ENCODE measurements at regions of chr11 and their contacts with region 1.

Region 1: DNA sequence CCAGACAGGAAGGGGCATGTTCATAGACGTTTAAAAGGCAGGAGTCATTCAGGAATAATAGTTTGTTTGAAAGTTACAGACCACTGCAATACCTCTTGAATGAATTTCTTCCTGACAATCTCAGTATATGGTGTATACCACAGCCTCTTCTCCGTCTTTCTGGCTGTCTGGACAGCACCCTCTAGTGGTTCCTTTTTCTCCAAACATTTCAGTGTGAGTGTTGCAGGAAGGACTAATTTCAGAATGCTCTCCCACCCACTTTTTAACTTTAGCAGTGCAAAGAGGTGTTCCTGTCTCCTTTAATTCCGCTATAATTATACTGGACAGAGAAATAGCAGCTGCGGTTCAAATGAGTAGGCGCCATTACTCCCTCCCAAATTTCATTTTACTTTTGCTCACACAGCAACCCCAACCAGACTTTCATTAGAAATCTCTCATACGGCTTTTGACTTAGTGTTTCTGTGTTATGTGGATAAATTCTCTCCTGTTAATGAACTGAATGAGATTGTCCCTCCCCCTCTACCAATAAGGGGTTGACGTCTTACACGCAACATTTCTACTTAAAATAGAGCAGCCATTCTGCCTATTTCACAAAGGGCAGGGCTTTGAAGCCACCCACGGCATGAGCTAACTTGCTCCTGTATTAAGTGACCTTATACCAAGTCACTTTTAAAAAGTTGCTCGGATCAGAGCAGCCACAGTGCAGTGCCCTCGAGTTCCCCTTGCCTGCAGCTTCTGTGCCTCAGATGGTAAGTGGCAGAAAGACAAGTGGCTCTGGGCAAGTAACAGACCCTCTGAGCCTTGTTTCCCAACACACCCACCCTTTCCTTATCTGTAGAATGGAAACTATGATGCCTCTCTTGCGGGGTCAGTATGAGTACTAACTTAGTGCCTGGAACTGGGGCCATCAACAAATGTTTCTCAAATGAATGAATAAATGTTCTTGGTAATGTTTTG is 368.6 kb downstream of the OPCML start:
- DNase-seq: peak in 1 of 2 donors; percentile 24
- ATAC-seq: peak; percentile 63 to 95 (median 78)
- H3K4me3 ChIP-seq: peak overlapping the region in 3 of 10 donors; percentile 2 to 26 (median 16)
- H3K27ac ChIP-seq: peak overlapping the region in 1 of 10 donors; percentile 31
- H3K4me1 ChIP-seq: peaks cover 0 to 7% (median 0%) of the 10 kb centered on the region in 9 donors
- H3K27me3 ChIP-seq: peaks cover 0 to 44% (median 6%) of the 10 kb centered on the region in 7 donors
- CTCF ChIP-seq: peak; percentile 48 to 80 (median 75)

Region 2: DNA sequence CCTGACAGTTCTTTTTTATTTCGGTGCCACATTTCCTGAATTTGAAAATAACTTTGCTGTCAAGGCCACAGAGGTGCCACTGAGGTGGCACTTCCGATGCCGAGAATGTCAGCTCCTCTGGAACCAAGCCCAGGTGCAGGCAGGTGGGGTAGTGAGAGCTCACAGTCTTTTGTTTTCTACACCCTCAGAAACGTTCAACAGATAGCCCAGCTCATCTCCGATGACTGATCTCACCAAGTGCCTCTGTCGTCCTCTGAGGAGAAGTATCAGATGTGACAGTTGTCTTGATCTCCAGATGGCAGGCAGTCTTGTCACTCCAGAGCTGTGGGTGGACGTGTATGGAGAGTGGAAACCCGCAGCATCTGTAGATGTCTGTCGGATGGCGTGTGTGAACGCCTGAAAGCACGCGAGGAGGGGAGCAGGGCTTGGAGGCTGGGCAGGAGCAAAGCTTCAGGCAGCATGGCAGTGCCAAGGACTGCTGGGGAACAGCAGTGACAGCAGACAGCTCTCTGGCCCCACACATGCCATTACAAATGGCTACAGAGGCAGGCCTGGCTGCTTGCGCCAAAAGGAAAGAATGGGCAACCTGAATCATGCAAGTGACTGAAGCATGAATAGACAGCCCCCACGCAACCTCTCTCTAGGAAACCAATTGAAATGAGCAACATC is 508.4 kb before region 1 on chr11:
- intact Hi-C with region 1: no loop called
- DNase-seq: no peak
- ATAC-seq: no peak
- H3K4me3 ChIP-seq: no peak overlapping the region
- H3K27ac ChIP-seq: no peak overlapping the region
- H3K4me1 ChIP-seq: no peaks in the 10 kb centered on the region
- H3K27me3 ChIP-seq: peaks cover 0 to 12% (median 0%) of the 10 kb centered on the region in 7 donors
- CTCF ChIP-seq: no peak

Region 3: GRCh38 chr11:132911186-132911585 is 252.6 kb before region 1 on chr11:
- intact Hi-C with region 1: no loop called
- DNase-seq: no peak
- ATAC-seq: no peak
- H3K4me3 ChIP-seq: no peak overlapping the region
- H3K27ac ChIP-seq: no peak overlapping the region
- H3K4me1 ChIP-seq: peaks cover 0 to 3% (median 0%) of the 10 kb centered on the region in 9 donors
- H3K27me3 ChIP-seq: peaks cover 0 to 21% (median 0%) of the 10 kb centered on the region in 7 donors
- CTCF ChIP-seq: no peak

Region 4: DNA sequence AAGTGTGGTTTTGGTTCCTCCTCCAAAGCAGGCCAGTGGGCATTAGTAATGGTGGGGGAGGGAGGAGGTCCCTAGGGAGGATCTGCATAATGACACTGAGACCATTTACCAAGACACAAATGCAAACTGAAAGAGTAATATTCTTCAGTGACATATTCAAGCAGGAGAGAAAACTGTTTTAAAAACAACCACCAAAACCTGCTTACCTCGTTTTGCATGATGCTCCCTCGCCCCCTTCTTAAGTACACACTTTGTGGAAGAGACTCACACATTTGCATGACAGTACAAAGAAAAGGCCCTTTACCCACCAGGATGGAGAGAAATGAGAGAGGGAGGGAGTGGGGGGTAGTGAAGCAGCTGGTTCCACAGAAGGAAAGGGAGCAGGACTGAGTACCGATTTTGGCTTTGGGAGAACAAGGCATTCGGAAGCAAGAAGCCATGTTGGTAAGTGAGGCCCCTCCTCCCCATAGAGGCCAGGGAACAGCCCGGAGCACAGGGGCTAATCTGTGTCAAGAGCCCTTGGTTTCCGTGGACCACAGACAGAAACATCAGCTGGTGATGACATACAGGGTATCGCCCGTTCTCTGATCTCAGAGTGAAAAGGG is 381.6 kb after region 1 on chr11:
- intact Hi-C with region 1: loop called in 1 of 10 experiments (anchors 10 kb)
- DNase-seq: no peak
- ATAC-seq: no peak
- H3K4me3 ChIP-seq: no peak overlapping the region
- H3K27ac ChIP-seq: no peak overlapping the region
- H3K4me1 ChIP-seq: no peaks in the 10 kb centered on the region
- H3K27me3 ChIP-seq: peaks cover 0 to 17% (median 10%) of the 10 kb centered on the region in 7 donors
- CTCF ChIP-seq: no peak